Cardiac septum (tissue), 1 donor: ENCODE measurements at regions of chr2 and their contacts with region 1.

Region 1: DNA sequence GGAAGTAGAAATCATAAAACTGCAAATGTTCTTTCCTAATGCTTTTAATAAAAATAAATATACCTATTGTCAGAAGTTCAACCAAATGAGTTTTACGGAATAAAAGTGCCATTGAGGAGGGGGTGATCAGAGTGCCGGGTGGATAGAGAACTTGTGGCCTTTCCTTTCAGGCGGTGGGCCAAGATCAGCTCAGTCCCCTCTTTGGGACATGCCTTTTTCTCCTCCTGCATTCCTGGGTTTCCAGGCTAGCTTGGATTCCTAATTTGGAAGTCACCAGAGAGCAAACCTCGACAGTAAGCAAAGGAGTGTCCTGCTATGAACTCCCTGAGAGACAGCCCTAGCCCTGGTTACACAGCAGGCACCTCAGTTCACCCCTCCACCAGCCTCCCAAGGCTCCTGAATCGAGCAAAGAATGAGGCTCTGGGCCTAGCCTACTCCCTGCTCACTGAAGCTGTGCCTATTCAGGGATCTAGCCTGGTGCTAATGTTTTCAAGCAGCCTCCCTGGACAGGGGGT is 66.8 kb upstream of the RMDN2 start:
- DNase-seq: no peak

Region 2: DNA sequence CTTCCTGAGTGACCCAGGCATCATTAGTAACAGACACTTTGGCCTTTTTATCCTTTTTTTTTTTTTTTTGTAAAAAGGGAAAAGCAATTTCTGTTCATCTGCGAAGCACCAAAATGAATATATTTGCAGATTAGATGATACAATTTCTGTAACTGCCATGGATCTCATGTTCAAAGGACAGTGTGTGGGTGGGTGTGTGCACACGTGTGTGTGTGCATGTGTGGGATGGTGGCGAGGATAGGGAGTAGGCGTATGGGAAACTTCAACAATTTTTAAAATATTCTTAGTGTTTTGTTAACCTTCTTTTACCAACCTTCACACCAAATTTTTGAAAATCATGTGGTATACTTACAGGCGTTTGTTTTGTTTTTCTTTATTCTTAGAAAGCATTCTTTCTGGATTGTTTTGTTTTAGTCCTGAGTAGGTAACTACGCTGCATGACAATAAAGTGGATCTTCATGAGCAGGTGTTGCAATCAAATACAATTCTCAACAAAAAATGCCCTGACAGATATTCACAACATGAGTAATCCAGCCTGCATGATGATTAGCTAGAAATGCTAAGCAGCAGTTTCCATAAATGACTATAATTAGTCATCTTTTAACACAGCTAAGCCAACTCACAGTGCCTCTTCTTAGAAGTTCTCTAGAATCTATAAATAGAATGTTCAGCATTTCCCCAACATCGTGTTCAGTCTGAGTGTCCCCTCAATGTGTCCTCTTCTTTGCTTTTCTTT is 13.4 kb after region 1 on chr2:
- intact Hi-C with region 1: loop called (anchors 2 kb)
- DNase-seq: no peak